A673 (cell line): ENCODE measurements at regions of chr14 and their contacts with region 1.

Region 1: DNA sequence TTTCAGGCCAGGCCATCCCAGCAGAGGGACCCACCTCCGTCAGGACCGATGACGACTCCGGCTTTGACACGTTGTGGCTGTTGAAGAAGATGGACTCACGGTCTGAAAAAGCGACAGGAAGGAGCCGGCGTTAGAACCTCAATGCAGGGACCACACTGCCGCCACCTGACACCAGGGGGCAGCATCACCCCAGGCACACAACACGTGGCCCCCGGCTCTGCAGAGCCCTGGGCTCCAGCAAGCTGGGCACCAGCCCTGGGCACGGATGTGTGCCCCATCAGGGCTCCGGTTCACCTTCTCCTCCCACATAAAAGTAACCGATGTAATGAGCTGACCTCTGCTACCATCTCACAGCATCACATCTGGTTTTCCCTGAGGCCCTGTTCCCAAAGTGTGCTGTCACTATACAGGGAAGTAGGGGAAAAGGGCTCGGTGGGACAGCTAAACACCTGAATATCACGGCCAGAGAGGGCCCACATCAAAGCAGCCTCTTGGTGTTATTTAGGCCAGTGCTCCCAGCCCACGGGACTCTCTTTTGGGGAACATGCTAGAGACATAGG is 29.0 kb downstream of the CHGA start:
- DNase-seq: peak; percentile 77
- H3K4me3 ChIP-seq: no peak overlapping the region
- H3K27ac ChIP-seq: no peak overlapping the region
- H3K4me1 ChIP-seq: no peaks in the 10 kb centered on the region
- H3K27me3 ChIP-seq: no peaks in the 10 kb centered on the region
- CTCF ChIP-seq: peak; percentile 94

Region 2: DNA sequence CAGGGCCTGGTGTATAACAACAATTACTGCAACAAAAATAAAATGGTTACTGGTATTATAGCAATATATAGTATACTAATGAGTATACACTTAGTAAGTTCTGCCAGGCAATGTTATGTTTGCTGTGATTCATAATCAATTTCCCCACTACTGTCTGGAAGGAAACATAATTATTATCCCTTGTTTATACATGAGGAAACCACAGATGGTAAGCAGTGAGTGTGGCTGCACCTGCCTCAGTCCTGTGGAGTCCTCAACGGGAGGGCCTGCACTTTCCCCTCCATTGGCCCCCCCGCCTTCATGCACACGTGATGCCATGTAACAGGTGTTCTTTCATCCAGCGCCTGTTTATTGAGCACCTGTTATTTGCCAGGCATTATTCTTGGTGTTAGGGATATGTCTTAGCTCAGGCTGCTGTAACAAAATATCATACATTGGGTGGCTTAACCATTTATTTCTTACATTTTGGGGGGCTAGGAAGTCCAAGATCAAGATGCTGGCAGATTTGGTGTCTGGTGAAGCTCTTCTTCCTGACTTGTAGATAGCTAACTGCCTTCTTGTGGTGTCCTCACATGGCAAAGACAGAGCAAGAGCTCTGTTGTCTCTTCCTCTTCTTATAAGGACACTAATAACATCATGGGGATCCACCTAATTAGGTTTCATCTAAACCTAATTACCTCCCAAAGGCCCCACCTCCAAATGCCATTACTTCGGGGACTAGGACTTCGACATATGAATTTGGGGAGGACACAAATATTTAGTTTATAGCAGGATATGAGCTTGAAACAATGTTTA is 88.5 kb before region 1 on chr14:
- CTCF ChIA-PET with region 1: no interaction called
- POLR2A ChIA-PET with region 1: no interaction called
- intact Hi-C with region 1: no loop called
- DNase-seq: no peak
- H3K4me3 ChIP-seq: no peak overlapping the region
- H3K27ac ChIP-seq: no peak overlapping the region
- H3K4me1 ChIP-seq: no peaks in the 10 kb centered on the region
- H3K27me3 ChIP-seq: no peaks in the 10 kb centered on the region
- CTCF ChIP-seq: no peak

Region 3: GRCh38 chr14:93137864-93138263 is 185.9 kb after region 1 on chr14:
- CTCF ChIA-PET with region 1: no interaction called
- POLR2A ChIA-PET with region 1: no interaction called
- intact Hi-C with region 1: loop called (anchors 1 kb)
- DNase-seq: no peak
- H3K4me3 ChIP-seq: no peak overlapping the region
- H3K27ac ChIP-seq: no peak overlapping the region
- H3K4me1 ChIP-seq: no peaks in the 10 kb centered on the region
- H3K27me3 ChIP-seq: no peaks in the 10 kb centered on the region
- CTCF ChIP-seq: no peak

Region 4: DNA sequence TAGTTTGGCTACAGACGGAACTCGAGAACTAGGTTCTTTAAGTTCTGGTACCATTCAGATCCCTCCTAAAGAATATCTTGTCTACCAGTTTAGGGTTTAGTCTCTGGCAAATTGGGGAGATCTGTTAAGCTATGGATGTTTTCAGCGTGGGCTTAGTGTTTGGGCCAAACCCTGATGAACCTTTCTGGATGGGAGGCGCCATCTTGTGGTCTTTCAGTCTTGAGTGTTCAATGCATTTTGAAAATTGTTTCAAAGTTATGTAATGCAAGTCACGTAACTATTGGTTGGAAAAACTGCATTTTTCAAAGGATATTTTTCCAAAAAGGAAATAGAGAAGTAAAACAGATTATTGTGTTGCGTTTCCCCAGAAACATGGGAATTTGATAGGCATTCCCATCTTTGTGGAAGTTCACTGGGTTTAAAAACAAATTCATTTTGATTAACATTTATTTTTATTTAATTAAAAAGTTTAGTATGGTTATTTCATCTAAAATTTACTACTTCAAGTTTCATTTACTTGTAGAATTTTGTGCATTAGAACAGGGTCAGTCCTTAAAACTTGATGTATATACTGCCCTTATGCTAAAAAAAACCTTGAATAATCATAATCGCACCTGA is 667.3 kb after region 1 on chr14:
- CTCF ChIA-PET with region 1: no interaction called
- POLR2A ChIA-PET with region 1: no interaction called
- intact Hi-C with region 1: loop called (anchors 2 kb)
- DNase-seq: peak; percentile 71
- H3K4me3 ChIP-seq: no peak overlapping the region
- H3K27ac ChIP-seq: no peak overlapping the region
- H3K4me1 ChIP-seq: no peaks in the 10 kb centered on the region
- H3K27me3 ChIP-seq: peaks cover 16% of the 10 kb centered on the region
- CTCF ChIP-seq: peak; percentile 80